Activated CD4-positive, alpha-beta memory T cell treated with anti-CD3 and anti-CD28 coated beads for 36 hours (primary cell): ENCODE measurements at regions of chr4 and their contacts with region 1.

Region 1: GRCh38 chr4:2963175-2963965 is at the starts of genes GRK4 and NOP14:
- DNase-seq: peak; percentile 98
- H3K4me3 Mint-ChIP-seq: peak within 1 kb of the TSS; percentile 78
- H3K27ac Mint-ChIP-seq: peak within 1 kb of the TSS; percentile 94
- H3K4me1 Mint-ChIP-seq: peaks cover 30% of the 10 kb centered on the region
- H3K27me3 Mint-ChIP-seq: no peaks in the 10 kb centered on the region
- total RNA-seq, gene GRK4: 2.3 to 3.0 TPM
- total RNA-seq, gene NOP14: 67.4 to 73.4 TPM

Region 2: GRCh38 chr4:2418650-2419571 is 544.5 kb before region 1 on chr4 and contains the start of gene CFAP99:
- CTCF ChIA-PET with region 1: no interaction called
- POLR2A ChIA-PET with region 1: no interaction called
- intact Hi-C with region 1: loop called (anchors 5 kb)
- DNase-seq: peak; percentile 99
- H3K4me3 Mint-ChIP-seq: peak within 1 kb of the TSS; percentile 89
- H3K27ac Mint-ChIP-seq: peak within 1 kb of the TSS; percentile 74
- H3K4me1 Mint-ChIP-seq: peaks cover 33% of the 10 kb centered on the region
- H3K27me3 Mint-ChIP-seq: peaks cover 13% of the 10 kb centered on the region
- total RNA-seq, gene CFAP99: not detected

Region 3: DNA sequence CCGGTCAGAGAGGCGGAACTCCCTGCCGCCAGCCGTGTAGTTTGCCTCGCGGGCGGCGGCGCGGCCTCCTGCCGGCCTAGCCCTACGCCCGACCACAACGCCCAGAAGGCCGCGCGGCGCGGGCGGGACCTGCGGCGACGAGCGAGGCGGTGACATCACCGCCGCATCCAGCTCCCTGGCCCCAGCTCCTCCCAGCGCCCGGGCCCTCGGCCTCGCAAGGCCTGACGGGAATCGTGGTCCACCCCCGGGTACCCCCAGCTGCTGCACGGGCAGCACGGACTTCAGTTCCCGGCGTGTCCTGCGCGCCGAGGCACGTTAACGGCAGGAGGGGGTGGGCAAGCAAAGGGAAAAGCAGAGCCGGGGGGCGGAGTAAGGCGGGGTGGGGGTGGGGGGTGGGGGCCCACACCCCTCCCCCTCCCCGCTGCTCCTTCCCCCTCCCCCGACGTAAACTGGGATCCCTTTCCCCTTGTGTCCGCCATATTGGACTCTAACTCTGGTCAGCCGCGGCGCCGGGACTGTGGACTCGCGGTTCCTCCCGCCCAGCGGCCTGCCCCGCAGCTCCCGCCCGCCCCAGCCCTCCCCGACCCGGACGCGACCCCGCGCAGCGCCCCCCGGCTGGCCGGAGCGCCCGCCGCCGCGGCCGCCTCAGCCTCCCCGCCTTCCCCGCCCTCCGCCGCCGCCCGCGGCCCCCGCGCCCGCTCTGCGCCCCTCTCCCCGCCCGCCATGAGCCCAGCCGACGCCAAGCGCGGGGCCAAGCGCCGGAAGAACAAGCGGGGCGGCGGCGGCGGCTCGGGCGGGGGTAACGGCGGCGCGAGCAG is 427.0 kb before region 1 on chr4 and contains the start of gene FAM193A:
- CTCF ChIA-PET with region 1: no interaction called
- POLR2A ChIA-PET with region 1: no interaction called
- intact Hi-C with region 1: loop called (anchors 2 kb)
- DNase-seq: peak; percentile 100
- H3K4me3 Mint-ChIP-seq: peak within 1 kb of the TSS; percentile 87
- H3K27ac Mint-ChIP-seq: peak within 1 kb of the TSS; percentile 86
- H3K4me1 Mint-ChIP-seq: peaks cover 20% of the 10 kb centered on the region
- H3K27me3 Mint-ChIP-seq: no peaks in the 10 kb centered on the region
- total RNA-seq, gene FAM193A: 21.7 to 22.6 TPM

Region 4: DNA sequence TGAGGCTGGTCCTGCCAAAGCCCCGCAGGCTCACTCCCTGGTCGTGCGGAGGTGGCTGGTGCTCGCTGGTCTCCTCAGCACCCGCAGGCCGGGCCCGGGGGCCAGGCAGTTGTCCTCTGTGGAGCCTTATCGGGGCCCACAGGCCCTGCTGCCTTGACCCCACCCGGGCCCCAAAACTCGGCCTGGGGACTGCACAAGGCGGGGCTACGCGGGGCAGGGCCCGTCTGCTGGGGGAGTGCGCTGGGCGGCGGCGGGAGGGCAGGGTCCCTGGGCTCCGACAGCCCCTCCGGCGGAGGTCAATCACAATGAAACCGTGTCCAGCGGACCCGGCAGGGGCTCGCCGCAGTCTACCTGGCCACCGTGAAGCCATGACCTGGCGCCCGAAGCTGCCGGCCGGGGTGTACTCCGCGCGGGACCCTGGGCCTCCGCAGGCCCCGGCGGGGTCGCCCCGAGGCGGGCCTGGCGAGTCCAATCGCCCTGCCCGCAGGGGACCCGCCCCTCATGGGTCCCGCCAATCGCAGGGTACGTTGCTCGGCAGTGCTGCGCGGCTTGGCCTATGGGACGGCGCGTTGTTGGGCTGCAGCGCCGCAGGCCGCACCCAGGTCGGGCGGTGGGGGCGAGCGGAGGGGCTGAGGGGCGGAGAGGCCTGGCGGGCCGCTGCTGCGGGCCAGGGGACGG is 120.0 kb before region 1 on chr4 and contains the start of gene ADD1:
- CTCF ChIA-PET with region 1: no interaction called
- POLR2A ChIA-PET with region 1: no interaction called
- intact Hi-C with region 1: no loop called
- DNase-seq: peak; percentile 97
- H3K4me3 Mint-ChIP-seq: peak within 1 kb of the TSS; percentile 89
- H3K27ac Mint-ChIP-seq: peak within 1 kb of the TSS; percentile 82
- H3K4me1 Mint-ChIP-seq: peaks cover 51% of the 10 kb centered on the region
- H3K27me3 Mint-ChIP-seq: no peaks in the 10 kb centered on the region
- total RNA-seq, gene ADD1: 212 TPM

Region 5: DNA sequence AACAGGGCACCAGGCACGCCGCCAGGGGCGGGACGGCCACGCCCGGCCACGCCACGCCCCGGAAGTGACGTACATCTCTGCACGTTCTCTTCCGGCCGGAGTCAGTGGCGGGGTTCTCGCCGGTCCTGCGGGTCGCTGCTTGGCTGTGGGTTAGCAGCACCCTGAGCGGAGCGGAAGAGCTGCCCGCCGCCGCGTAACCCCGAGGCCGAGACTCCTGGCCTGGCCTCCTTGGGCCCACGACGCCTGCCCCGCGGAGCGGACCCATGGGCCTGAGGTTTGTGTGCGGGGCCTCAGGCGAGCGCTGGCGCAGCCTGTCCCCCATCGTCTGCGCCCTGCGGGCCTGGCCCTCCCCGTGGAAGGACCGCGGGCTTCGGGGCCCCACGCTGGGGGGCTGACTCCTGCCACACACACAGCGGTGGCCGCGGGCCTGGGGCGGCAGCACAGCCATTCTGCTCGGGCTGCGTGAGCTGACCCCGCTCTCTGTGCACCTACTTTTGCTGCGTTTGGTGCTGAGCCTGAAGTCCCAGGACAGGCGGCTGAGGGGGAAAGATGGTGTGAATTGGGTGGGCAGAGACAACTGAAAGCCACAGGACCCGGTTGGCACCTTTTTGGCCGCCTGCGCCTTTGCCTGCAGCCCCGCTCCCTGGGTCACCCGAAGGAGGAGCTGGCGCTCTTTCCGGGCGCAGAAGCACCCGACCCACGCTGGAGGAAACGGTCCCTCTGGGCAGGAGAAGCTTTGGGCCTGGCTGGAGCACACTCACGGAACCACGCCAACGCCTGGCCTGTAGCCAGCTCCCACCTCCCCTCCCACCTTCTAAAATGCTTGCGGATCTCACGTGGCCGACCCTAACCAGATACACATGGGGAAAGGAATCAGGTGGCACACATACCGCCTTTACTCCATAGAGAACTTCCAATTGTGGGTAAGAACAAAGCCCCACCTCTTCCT is 28.3 kb before region 1 on chr4:
- CTCF ChIA-PET with region 1: interaction called, 20 read pairs
- POLR2A ChIA-PET with region 1: interaction called, 70 read pairs
- intact Hi-C with region 1: loop called (anchors 1 kb)
- DNase-seq: peak; percentile 97
- H3K4me3 Mint-ChIP-seq: peak overlapping the region; percentile 93
- H3K27ac Mint-ChIP-seq: peak overlapping the region; percentile 95
- H3K4me1 Mint-ChIP-seq: peaks cover 53% of the 10 kb centered on the region
- H3K27me3 Mint-ChIP-seq: no peaks in the 10 kb centered on the region

Region 6: GRCh38 chr4:3009422-3009821 is 46.1 kb after region 1 on chr4:
- CTCF ChIA-PET with region 1: interaction called, 8 read pairs
- POLR2A ChIA-PET with region 1: interaction called, 7 read pairs
- intact Hi-C with region 1: loop called (anchors 1 kb)
- DNase-seq: peak; percentile 62
- H3K4me3 Mint-ChIP-seq: no peak overlapping the region
- H3K27ac Mint-ChIP-seq: peak overlapping the region; percentile 45
- H3K4me1 Mint-ChIP-seq: peaks cover 25% of the 10 kb centered on the region
- H3K27me3 Mint-ChIP-seq: peaks cover 18% of the 10 kb centered on the region

Region 7: GRCh38 chr4:3074078-3074795 is 110.9 kb after region 1 on chr4 and contains the starts of genes HTT and HTT-AS:
- CTCF ChIA-PET with region 1: no interaction called
- POLR2A ChIA-PET with region 1: no interaction called
- intact Hi-C with region 1: loop called (anchors 1 kb)
- DNase-seq: peak; percentile 98
- H3K4me3 Mint-ChIP-seq: peak within 1 kb of the TSS; percentile 89
- H3K27ac Mint-ChIP-seq: peak within 1 kb of the TSS; percentile 88
- H3K4me1 Mint-ChIP-seq: peaks cover 24% of the 10 kb centered on the region
- H3K27me3 Mint-ChIP-seq: no peaks in the 10 kb centered on the region
- total RNA-seq, gene HTT: 57.6 to 69.8 TPM
- total RNA-seq, gene HTT-AS: not detected